IMR-90 (cell line): ENCODE measurements at regions of chr13 and their contacts with region 1.

Region 1: DNA sequence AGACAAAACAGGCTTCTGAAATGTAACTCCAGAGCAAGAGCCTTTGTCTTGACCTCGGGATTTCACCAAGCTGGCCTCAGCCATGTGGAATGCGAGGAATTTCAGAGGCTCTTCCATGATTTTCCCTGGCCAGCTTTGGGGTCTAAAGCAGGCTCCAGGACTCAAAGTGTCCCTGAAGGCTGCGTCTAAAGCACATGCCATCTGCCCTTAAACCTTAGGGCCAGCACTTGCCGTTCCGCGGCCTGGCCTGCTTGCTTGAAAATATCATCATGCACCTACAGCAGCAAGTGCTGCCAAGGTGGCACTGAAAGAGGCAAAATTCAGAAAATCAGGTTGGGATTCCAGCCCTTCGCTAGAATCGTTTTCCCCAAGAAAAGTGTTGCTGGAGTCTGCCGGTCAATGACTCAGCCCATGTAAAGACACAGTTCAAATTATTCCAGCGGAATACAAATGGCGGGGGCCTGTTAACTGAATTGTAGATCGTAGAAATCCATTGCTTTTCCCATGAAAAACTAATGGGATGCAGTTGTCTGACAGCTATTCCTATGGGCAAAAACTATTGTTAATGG is 105.7 kb upstream of the RAP2A start:
- DNase-seq: peak; percentile 86
- ATAC-seq: peak; percentile 85
- H3K4me3 ChIP-seq: no peak overlapping the region
- H3K27ac ChIP-seq: peak overlapping the region; percentile 92
- H3K4me1 ChIP-seq: peaks cover 17% of the 10 kb centered on the region
- H3K27me3 ChIP-seq: no peaks in the 10 kb centered on the region
- CTCF ChIP-seq: no peak
- POLR2A ChIP-seq: no peak
- RAD21 ChIP-seq: no peak

Region 2: GRCh38 chr13:97275265-97275664 is 53.0 kb before region 1 on chr13:
- CTCF ChIA-PET with region 1: no interaction called
- POLR2A ChIA-PET with region 1: no interaction called
- dilution Hi-C with region 1: no loop called
- in situ Hi-C with region 1: no loop called
- intact Hi-C with region 1: loop called (anchors 5 kb)
- DNase-seq: peak; percentile 92
- ATAC-seq: peak; percentile 45
- H3K4me3 ChIP-seq: no peak overlapping the region
- H3K27ac ChIP-seq: peak overlapping the region; percentile 45; the same call in 1 of the 2 replicates
- H3K4me1 ChIP-seq: peaks cover 30% of the 10 kb centered on the region
- H3K27me3 ChIP-seq: no peaks in the 10 kb centered on the region
- CTCF ChIP-seq: no peak
- POLR2A ChIP-seq: no peak
- RAD21 ChIP-seq: no peak